ENCODE measurements at regions of chr19 and their contacts with region 1.

Region 1: DNA sequence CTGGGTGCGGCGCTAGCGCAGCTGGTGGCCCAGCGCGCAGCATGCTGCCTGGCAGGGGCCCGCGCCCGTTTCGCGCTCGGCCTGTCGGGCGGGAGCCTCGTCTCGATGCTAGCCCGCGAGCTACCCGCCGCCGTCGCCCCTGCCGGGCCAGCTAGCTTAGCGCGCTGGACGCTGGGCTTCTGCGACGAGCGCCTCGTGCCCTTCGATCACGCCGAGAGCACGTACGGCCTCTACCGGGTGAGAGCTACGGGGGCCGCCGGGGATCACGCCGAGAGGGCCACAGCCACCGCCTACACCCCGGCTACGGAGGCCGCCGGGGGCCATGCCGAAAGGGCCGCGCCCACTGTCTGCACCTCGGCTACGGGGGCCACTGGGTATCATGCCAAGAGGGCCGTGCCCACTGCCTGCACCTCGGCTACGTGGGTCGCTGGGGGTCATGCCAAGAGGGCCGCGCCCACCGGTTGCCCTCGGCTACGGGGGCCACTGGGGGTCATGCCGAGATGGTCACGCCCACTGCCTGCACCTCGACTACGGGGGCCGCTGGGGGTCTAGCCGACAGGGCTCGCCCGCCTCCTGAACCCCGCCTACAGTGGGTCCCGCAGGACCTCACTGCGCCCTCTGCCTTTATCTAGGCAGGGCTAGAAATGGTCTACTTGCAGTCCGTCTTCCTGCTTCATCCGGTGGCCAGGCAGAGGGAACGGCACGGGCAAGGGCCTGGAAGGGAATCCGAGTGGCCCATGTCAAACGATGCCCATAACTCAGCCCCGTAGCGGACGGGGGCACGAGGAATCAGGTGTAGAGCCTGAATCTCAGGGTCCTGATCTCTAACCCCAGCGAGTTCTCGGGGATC is 500 bp downstream of the PGLS start:
- DNase-seq: peak; percentile 96
- ATAC-seq: peak; percentile 84
- H3K4me3 ChIP-seq: peak overlapping the region; percentile 68 to 98 (median 85)
- H3K4me3 Mint-ChIP-seq: peak overlapping the region; percentile 96
- H3K27ac ChIP-seq: peak overlapping the region; percentile 82 to 94
- H3K27ac Mint-ChIP-seq: peak overlapping the region; percentile 95
- H3K4me1 ChIP-seq: peaks cover 18 to 24% of the 10 kb centered on the region in 2 donors
- H3K4me1 Mint-ChIP-seq: peaks cover 40% of the 10 kb centered on the region
- H3K27me3 ChIP-seq: no peaks in the 10 kb centered on the region
- H3K27me3 Mint-ChIP-seq: no peaks in the 10 kb centered on the region
- CTCF ChIP-seq: peak; percentile 38

Region 2: GRCh38 chr19:17429641-17430113 is 82.3 kb before region 1 on chr19:
- CTCF ChIA-PET with region 1: no interaction called
- POLR2A ChIA-PET with region 1: no interaction called
- intact Hi-C with region 1: no loop called
- DNase-seq: no peak
- ATAC-seq: no peak
- H3K4me3 ChIP-seq: no peak overlapping the region
- H3K4me3 Mint-ChIP-seq: no peak overlapping the region
- H3K27ac ChIP-seq: no peak overlapping the region
- H3K27ac Mint-ChIP-seq: no peak overlapping the region
- H3K4me1 ChIP-seq: no peaks in the 10 kb centered on the region
- H3K4me1 Mint-ChIP-seq: no peaks in the 10 kb centered on the region
- H3K27me3 ChIP-seq: no peaks in the 10 kb centered on the region
- H3K27me3 Mint-ChIP-seq: no peaks in the 10 kb centered on the region
- CTCF ChIP-seq: no peak

Region 3: GRCh38 chr19:17539238-17540117 is 27.5 kb after region 1 on chr19:
- CTCF ChIA-PET with region 1: interaction called, 8 read pairs
- POLR2A ChIA-PET with region 1: interaction called, 11 read pairs
- intact Hi-C with region 1: loop called (anchors 1 kb)
- DNase-seq: peak; percentile 99
- ATAC-seq: peak; percentile 92
- H3K4me3 ChIP-seq: peak overlapping the region in 4 of 5 experiments; percentile 14 to 53 (median 40)
- H3K4me3 Mint-ChIP-seq: peak overlapping the region; percentile 93
- H3K27ac ChIP-seq: peak overlapping the region; percentile 54 to 59
- H3K27ac Mint-ChIP-seq: peak overlapping the region; percentile 97
- H3K4me1 ChIP-seq: peaks cover 26 to 46% of the 10 kb centered on the region in 2 donors
- H3K4me1 Mint-ChIP-seq: peaks cover 54% of the 10 kb centered on the region
- H3K27me3 ChIP-seq: no peaks in the 10 kb centered on the region
- H3K27me3 Mint-ChIP-seq: no peaks in the 10 kb centered on the region
- CTCF ChIP-seq: no peak

Region 4: GRCh38 chr19:17570791-17571190 is 58.8 kb after region 1 on chr19:
- CTCF ChIA-PET with region 1: interaction called, 13 read pairs
- POLR2A ChIA-PET with region 1: no interaction called
- intact Hi-C with region 1: loop called (anchors 5 kb)
- DNase-seq: no peak
- ATAC-seq: no peak
- H3K4me3 ChIP-seq: no peak overlapping the region
- H3K4me3 Mint-ChIP-seq: no peak overlapping the region
- H3K27ac ChIP-seq: no peak overlapping the region
- H3K27ac Mint-ChIP-seq: no peak overlapping the region
- H3K4me1 ChIP-seq: no peaks in the 10 kb centered on the region
- H3K4me1 Mint-ChIP-seq: peaks cover 3% of the 10 kb centered on the region
- H3K27me3 ChIP-seq: no peaks in the 10 kb centered on the region
- H3K27me3 Mint-ChIP-seq: no peaks in the 10 kb centered on the region
- CTCF ChIP-seq: no peak

Region 5: GRCh38 chr19:17581211-17581874 is 69.4 kb after region 1 on chr19:
- CTCF ChIA-PET with region 1: no interaction called
- POLR2A ChIA-PET with region 1: no interaction called
- intact Hi-C with region 1: no loop called
- DNase-seq: no peak
- ATAC-seq: no peak
- H3K4me3 ChIP-seq: no peak overlapping the region
- H3K4me3 Mint-ChIP-seq: no peak overlapping the region
- H3K27ac ChIP-seq: no peak overlapping the region
- H3K27ac Mint-ChIP-seq: no peak overlapping the region
- H3K4me1 ChIP-seq: peaks cover 0 to 5% of the 10 kb centered on the region in 2 donors
- H3K4me1 Mint-ChIP-seq: peaks cover 15% of the 10 kb centered on the region
- H3K27me3 ChIP-seq: no peaks in the 10 kb centered on the region
- H3K27me3 Mint-ChIP-seq: no peaks in the 10 kb centered on the region
- CTCF ChIP-seq: no peak

Measured in B cell (primary cell).